ENCODE measurements at regions of chr7 and their contacts with region 1.

Region 1: DNA sequence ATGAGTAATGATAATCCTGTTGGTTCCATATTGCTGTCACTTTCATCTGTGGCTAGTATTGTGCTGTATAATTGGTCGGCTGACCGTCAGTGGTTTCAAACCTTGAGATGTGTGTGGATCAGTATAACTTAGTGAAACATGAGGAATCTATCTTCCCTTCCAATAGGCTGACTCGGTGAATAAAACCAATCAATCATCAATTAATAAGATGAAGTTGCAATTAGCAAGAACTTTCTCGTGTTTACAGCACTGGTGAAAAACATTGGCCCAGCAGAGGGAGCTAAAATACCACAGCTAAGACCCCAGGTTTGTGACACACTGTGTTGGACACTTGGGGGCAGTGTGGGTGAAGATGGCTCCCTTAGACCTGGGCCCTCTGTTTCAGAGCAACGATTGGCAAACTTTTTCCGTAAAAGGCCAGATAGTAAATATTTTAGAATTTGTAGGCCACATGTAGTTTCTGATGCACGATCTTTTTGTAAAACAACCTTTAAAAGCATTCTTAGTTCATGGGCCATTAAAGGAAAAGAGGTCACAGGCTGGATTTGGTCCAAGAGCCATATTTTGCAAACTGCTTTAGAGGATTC is 47.8 kb downstream of the STRA8 start:
- DNase-seq: no peak
- H3K4me3 ChIP-seq: no peak overlapping the region
- H3K27ac ChIP-seq: no peak overlapping the region
- H3K4me1 ChIP-seq: peaks cover 0 to 9% (median 9%) of the 10 kb centered on the region in 6 donors
- H3K27me3 ChIP-seq: peaks cover 0 to 5% (median 0%) of the 10 kb centered on the region in 7 donors
- CTCF ChIP-seq: peak; percentile 80 to 97 (median 88)
- POLR2A ChIP-seq: no peak

Region 2: DNA sequence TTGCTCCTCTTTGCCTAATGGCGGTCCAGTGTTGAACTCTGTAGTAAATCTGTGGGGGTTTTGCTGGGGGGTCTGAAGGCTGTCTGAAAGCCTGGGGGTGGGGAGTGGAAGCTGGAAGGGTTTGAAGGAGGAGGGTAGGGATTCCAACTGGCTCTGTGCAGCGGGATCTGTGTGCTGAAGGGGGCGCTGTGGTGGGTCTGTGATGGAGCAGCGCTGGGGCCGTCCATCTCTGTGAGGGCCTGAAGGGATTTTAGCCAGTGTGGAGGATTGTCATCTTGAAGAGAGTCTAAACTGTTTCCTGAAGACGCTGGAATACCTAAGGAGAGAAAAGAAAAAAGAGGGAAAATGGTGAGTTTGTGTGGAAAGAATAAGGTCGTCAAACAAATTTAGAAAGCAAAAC is 81.4 kb after region 1 on chr7:
- intact Hi-C with region 1: no loop called
- DNase-seq: no peak
- H3K4me3 ChIP-seq: no peak overlapping the region
- H3K27ac ChIP-seq: peak overlapping the region in 3 of 8 donors; percentile 27 to 39 (median 27)
- H3K4me1 ChIP-seq: peaks cover 0 to 5% (median 0%) of the 10 kb centered on the region in 6 donors
- H3K27me3 ChIP-seq: no peaks in the 10 kb centered on the region
- CTCF ChIP-seq: no peak
- POLR2A ChIP-seq: no peak

Region 3: DNA sequence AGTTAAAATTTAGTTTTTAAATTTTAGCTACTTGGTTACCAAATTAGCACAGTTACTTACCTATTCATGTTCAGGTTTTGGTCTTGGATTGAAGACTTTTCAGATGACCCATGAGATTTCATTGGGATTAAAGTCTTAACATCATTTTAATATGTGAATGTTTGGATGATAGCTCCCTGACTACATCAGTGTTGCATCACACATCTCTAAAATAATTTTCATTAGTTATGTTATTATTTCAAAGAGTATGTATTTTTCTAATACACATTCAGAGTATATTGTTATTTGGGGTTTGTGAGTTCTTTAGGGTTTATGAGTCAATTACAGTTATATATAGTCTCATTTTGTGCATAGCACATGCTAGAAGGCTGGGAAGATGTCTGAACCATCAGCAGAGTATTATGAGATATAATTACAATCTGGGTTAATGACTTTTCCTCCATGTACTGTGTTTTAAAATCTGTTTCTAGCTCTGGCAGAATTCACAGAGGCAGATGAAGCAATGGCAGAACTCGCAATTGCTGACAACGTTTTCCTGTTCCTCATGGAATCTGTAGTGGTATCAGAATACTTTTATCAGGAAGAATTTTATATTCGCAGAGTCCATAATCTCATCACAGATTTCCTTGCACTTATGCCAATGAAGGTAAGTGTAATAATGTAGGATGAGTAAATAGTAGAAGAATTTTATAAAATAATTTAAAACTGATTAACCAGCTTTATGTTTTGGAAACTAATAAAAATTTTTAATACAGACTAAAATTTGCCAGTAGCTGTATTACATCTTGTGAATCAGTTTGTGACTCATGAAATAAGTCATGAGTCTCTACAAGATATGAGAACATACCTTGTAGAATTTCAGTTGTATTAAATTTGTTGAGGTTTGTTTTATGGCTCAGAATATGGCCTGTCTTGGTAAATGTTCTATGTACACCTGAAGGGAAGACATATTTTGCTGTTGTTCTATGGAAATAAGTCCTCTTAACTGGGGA is 303.2 kb after region 1 on chr7:
- intact Hi-C with region 1: no loop called
- DNase-seq: no peak
- H3K4me3 ChIP-seq: no peak overlapping the region
- H3K27ac ChIP-seq: no peak overlapping the region
- H3K4me1 ChIP-seq: no peaks in the 10 kb centered on the region
- H3K27me3 ChIP-seq: no peaks in the 10 kb centered on the region
- CTCF ChIP-seq: no peak
- POLR2A ChIP-seq: no peak

Region 4: GRCh38 chr7:135645296-135645904 is 363.9 kb after region 1 on chr7:
- intact Hi-C with region 1: loop called (anchors 5 kb)
- DNase-seq: no peak
- H3K4me3 ChIP-seq: no peak overlapping the region
- H3K27ac ChIP-seq: peak overlapping the region in 1 of 8 donors; percentile 1
- H3K4me1 ChIP-seq: peaks cover 0 to 10% (median 5%) of the 10 kb centered on the region in 6 donors
- H3K27me3 ChIP-seq: no peaks in the 10 kb centered on the region
- CTCF ChIP-seq: peak; percentile 33 to 79 (median 71)
- POLR2A ChIP-seq: no peak

Region 5: DNA sequence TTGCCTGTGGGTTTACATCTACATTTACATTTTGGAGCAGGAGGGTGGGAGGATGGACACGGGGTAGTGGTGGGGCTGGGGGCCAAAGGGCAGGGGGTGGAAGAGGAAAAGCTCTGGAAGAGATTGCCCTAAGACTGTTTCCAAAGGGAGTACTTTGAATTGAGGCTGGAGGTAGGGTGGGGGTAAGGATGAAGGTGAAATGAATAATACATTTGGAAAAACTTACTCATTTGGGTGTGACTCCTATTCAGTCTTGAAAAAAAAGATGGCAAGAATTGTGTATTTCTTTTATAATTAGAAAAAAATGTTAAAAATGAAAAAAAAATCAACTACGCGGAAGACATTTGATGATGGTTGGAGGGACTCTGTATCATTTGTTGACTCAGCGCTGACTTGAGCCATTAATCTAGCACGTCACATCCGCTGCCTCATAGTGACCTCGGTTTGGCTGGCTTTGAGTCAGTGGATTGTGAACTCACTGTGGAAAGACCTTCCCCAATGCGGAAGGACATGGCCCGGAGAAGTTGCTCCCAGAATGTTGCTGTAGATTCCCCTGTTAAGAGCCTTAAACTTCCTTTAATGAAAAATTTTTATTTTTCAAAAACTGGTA is 464.4 kb after region 1 on chr7:
- intact Hi-C with region 1: no loop called
- DNase-seq: no peak
- H3K4me3 ChIP-seq: no peak overlapping the region
- H3K27ac ChIP-seq: no peak overlapping the region
- H3K4me1 ChIP-seq: no peaks in the 10 kb centered on the region
- H3K27me3 ChIP-seq: peaks cover 0 to 10% (median 0%) of the 10 kb centered on the region in 7 donors
- CTCF ChIP-seq: no peak
- POLR2A ChIP-seq: no peak